Activated naive CD4-positive, alpha-beta T cell treated with anti-CD3 and anti-CD28 coated beads for 36 hours (primary cell): ENCODE measurements at regions of chr2 and their contacts with region 1.

Region 1: DNA sequence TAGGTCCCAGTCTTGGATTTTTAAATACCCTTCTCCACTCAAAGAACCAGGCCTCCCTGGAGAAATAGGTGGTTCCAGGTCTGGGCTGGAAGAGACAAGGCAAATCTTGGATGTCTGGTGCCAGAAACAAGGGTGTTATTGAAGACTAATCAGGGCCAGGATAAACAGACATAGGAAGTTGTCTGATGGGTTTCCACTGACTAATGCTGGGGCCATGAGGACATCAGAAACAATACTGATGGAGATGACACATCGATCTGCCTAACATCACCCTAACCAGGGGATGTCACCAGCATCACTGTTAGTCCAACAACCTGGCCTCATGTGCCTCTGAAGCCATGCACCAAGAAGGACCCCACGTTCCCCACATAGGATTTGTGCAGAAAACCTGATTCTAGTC is 42.5 kb upstream of the GLI2 start:
- DNase-seq: no peak
- H3K4me3 Mint-ChIP-seq: no peak overlapping the region
- H3K27ac Mint-ChIP-seq: no peak overlapping the region
- H3K4me1 Mint-ChIP-seq: peaks cover 6% of the 10 kb centered on the region
- H3K27me3 Mint-ChIP-seq: peaks cover 46% of the 10 kb centered on the region

Region 2: DNA sequence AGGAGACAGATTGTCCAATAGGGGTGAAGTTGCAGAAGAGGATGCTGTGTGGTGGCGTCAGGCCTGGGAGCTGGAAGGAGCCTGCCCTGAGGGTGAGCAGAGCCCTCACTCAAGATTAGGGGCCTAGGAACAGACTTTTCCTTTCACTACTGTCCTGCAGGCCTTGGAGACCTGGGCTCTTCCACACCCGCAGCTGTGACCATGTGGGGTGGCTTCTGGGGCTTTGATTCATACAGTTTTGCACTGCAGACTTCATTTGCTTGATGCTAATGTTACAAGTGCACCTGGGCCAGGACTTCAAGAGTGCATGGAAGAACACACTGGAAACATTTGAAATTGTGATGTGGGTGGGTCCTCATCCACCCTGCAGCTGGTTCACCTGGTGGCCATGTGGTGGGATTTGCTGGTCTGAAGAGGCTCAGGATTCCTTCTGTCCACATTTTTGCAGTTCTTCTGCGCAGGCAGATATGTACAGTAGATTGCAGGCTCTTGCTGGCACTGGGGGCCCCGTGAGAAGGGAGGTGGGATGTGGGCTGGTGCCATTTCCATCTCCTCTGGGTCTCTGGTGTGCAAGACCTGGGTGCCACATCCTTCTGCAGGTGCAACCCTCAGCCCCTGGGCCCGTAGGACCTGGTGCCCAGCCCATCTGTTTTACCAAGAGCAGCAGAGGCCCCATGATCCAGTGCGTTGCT is 52.4 kb after region 1 on chr2:
- CTCF ChIA-PET with region 1: no interaction called
- intact Hi-C with region 1: no loop called
- DNase-seq: no peak
- H3K4me3 Mint-ChIP-seq: no peak overlapping the region
- H3K27ac Mint-ChIP-seq: no peak overlapping the region
- H3K4me1 Mint-ChIP-seq: no peaks in the 10 kb centered on the region
- H3K27me3 Mint-ChIP-seq: peaks cover 28% of the 10 kb centered on the region

Region 3: DNA sequence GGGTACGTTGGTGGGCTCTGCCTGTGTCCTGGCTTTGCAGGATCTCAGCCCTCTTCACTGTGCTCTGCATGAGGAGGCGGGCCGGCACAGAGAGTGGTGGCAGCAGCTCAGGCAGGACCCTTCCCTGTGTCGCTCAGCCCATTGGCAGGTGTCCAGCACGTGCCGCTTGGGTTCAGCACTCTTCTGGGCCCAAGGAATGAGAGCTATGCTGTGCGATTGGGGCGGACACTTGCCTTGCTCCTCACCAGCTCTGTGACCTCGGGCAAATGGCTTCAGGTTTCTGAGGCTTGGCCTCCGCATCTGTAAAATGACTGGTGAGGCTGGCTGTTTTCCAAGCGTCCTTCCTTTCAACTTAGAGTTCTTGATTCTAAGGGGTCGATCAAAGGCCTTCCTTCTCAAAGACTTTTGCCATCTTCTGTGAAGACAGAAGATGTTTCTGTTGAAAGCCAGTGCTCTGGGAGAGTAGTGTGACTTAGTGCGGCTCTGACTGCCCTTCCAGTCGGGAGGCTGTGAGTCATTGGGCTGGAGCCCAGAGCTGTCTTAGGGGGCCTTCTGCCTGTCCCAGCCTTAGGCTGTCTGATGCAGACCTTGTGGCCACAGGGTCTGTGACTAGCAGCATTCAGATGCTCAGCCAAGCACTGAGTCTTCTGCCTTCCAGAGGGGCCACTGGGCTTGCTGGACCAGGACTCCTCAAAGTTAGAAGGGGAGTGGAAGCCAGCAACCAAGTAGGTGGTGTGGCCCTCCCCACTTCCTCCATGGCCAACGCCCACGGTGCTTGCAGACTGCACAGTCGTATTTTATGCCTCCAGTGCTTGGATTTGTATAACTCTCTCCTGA is 78.2 kb after region 1 on chr2:
- CTCF ChIA-PET with region 1: no interaction called
- intact Hi-C with region 1: no loop called
- DNase-seq: no peak
- H3K4me3 Mint-ChIP-seq: no peak overlapping the region
- H3K27ac Mint-ChIP-seq: no peak overlapping the region
- H3K4me1 Mint-ChIP-seq: no peaks in the 10 kb centered on the region
- H3K27me3 Mint-ChIP-seq: no peaks in the 10 kb centered on the region

Region 4: DNA sequence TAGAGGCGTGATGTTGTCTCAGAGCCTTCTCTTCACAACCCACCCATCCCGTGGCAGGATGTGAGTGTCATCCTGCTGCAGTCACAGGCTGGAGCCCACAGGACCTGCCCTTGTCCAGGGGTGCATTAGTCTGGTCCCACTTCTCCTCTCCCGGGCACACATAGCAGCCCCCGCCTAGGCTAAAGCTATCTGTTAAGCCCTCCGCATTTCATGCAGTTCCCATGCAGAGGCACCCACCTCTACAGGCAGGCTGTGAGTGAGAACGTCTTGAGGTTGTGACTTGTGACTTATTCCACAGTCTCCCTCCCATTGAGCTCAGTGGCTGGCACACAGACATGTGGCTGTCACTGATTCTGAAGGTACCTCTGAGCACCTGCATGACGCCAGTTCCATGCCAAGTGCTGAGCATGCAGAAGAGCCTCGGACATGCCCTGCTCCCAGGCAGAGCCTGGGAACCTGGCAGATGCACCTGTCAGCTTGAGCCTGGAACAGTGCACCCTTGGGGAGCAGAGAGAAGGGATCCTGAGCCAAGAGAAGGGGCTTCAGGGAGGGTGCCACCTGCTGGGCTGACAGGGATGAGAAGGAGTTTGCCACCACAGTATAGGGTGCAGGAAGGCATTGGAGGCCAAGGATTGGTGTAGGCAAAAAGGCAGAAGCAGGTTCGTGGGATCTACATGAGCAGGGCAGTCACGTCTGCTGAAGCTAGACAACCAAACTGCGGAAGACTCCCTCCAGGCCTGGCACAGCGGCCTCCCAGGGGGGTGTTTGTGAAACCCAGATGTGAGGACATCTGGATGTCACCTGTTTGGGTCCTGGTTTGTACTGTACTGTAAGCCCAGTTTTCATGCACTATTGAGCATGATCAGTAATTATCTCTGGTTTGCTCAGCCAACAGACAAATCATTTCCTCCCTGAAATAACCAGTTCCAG is 256.2 kb after region 1 on chr2:
- CTCF ChIA-PET with region 1: no interaction called
- intact Hi-C with region 1: loop called (anchors 10 kb)
- DNase-seq: no peak
- H3K4me3 Mint-ChIP-seq: no peak overlapping the region
- H3K27ac Mint-ChIP-seq: no peak overlapping the region
- H3K4me1 Mint-ChIP-seq: no peaks in the 10 kb centered on the region
- H3K27me3 Mint-ChIP-seq: no peaks in the 10 kb centered on the region

Region 5: GRCh38 chr2:121071034-121071504 is 377.9 kb after region 1 on chr2:
- CTCF ChIA-PET with region 1: interaction called, 9 read pairs
- intact Hi-C with region 1: loop called (anchors 1 kb)
- DNase-seq: peak; percentile 70
- H3K4me3 Mint-ChIP-seq: no peak overlapping the region
- H3K27ac Mint-ChIP-seq: no peak overlapping the region
- H3K4me1 Mint-ChIP-seq: no peaks in the 10 kb centered on the region
- H3K27me3 Mint-ChIP-seq: peaks cover 12% of the 10 kb centered on the region

Region 6: GRCh38 chr2:121076885-121077549 is 383.9 kb after region 1 on chr2:
- CTCF ChIA-PET with region 1: interaction called, 14 read pairs
- intact Hi-C with region 1: loop called (anchors 1 kb)
- DNase-seq: peak; percentile 79
- H3K4me3 Mint-ChIP-seq: no peak overlapping the region
- H3K27ac Mint-ChIP-seq: no peak overlapping the region
- H3K4me1 Mint-ChIP-seq: no peaks in the 10 kb centered on the region
- H3K27me3 Mint-ChIP-seq: peaks cover 17% of the 10 kb centered on the region

Region 7: GRCh38 chr2:122078451-122078850 is 1385.3 kb after region 1 on chr2:
- CTCF ChIA-PET with region 1: no interaction called
- intact Hi-C with region 1: no loop called
- DNase-seq: no peak
- H3K4me3 Mint-ChIP-seq: no peak overlapping the region
- H3K27ac Mint-ChIP-seq: no peak overlapping the region
- H3K4me1 Mint-ChIP-seq: no peaks in the 10 kb centered on the region
- H3K27me3 Mint-ChIP-seq: no peaks in the 10 kb centered on the region